CD4-positive, alpha-beta T cell (primary cell): ENCODE measurements at regions of chr17 and their contacts with region 1.

Region 1: GRCh38 chr17:55264645-55265298 is at the start of gene HLF:
- DNase-seq: peak; percentile 53 to 93 (median 69)
- ATAC-seq: peak; percentile 90
- H3K4me3 ChIP-seq: peak within 1 kb of the TSS; percentile 60
- H3K4me3 Mint-ChIP-seq: peak within 1 kb of the TSS; percentile 86
- H3K27ac ChIP-seq: no peak within 1 kb of the TSS
- H3K27ac Mint-ChIP-seq: no peak within 1 kb of the TSS
- H3K4me1 ChIP-seq: peaks cover 33% of the 10 kb centered on the region
- H3K4me1 Mint-ChIP-seq: peaks cover 24% of the 10 kb centered on the region
- H3K27me3 ChIP-seq: peaks cover 41 to 49% of the 10 kb centered on the region in 2 experiments
- H3K27me3 Mint-ChIP-seq: peaks cover 65% of the 10 kb centered on the region
- CTCF ChIP-seq: no peak
- total RNA-seq, gene HLF: 4.3 to 4.9 TPM

Region 2: DNA sequence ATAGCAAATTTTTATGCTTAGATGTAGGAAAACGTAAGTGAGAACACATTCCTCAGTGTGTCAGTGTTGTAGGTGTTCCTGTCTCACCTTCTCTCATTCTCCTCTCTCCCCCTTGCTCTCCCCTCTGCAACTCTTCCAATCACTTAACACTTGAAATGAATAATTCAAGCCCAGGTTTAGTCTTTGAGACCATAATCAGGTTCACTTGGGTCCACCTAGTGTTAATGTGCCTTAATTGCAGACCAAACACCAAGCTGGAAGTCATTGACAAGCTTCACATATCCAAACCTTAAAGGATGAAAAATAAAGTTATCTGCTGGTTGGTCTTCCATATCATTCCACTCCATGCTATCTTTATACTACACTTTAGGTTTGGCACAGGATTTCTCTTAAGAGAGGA is 259.3 kb before region 1 on chr17:
- CTCF ChIA-PET with region 1: no interaction called
- POLR2A ChIA-PET with region 1: no interaction called
- intact Hi-C with region 1: no loop called
- DNase-seq: peak in 3 of 14 experiments; percentile 0 to 13 (median 11)
- ATAC-seq: no peak
- H3K4me3 ChIP-seq: no peak overlapping the region
- H3K4me3 Mint-ChIP-seq: no peak overlapping the region
- H3K27ac ChIP-seq: no peak overlapping the region
- H3K27ac Mint-ChIP-seq: no peak overlapping the region
- H3K4me1 ChIP-seq: no peaks in the 10 kb centered on the region
- H3K4me1 Mint-ChIP-seq: no peaks in the 10 kb centered on the region
- H3K27me3 ChIP-seq: no peaks in the 10 kb centered on the region
- H3K27me3 Mint-ChIP-seq: no peaks in the 10 kb centered on the region
- CTCF ChIP-seq: peak; percentile 26

Region 3: DNA sequence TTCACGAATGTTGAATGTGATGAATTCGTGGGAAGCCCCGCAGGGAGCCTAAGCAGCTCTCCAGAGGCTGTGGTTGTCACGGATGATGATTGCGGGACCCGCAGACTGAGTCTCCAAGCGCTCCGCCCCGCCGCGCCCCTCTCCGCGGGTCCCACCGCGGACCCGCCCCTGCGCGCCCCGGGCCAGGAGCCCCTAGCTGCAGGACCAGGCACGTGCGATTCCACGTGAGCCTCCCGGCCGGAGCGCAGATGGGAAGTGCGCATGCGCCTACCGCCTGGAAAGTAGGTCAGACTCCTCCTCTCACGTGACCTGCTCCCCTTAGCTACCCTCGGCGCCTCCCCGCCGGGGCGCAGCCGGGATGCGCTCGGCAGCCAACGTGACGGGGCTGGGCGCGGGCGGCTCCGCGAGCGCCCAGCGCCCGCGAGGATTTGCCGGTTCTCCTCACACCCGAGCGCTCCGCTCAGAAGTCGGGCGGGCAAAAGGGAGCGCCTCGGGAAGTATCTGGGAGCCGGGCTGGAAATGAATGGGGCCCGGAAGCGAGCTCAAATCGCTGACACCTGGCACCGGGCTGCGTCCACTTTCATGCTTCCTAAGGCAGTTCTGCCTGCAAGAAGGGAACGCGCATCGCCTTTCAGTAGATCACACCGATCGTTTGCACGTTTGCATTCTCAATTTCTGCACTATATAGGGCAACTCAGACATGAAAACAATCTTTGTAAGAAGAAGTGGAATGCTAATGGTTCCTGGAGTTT is 26.4 kb before region 1 on chr17:
- CTCF ChIA-PET with region 1: interaction called, 6 read pairs
- POLR2A ChIA-PET with region 1: interaction called, 57 read pairs
- intact Hi-C with region 1: loop called (anchors 1 to 2 kb)
- DNase-seq: peak; percentile 75 to 96 (median 84)
- ATAC-seq: peak; percentile 89
- H3K4me3 ChIP-seq: peak overlapping the region; percentile 74
- H3K4me3 Mint-ChIP-seq: peak overlapping the region; percentile 89
- H3K27ac ChIP-seq: peak overlapping the region in 1 of 2 donors; percentile 65
- H3K27ac Mint-ChIP-seq: peak overlapping the region; percentile 87
- H3K4me1 ChIP-seq: peaks cover 19% of the 10 kb centered on the region
- H3K4me1 Mint-ChIP-seq: peaks cover 25% of the 10 kb centered on the region
- H3K27me3 ChIP-seq: peaks cover 0 to 3% of the 10 kb centered on the region in 2 experiments
- H3K27me3 Mint-ChIP-seq: peaks cover 23% of the 10 kb centered on the region
- CTCF ChIP-seq: no peak

Region 4: DNA sequence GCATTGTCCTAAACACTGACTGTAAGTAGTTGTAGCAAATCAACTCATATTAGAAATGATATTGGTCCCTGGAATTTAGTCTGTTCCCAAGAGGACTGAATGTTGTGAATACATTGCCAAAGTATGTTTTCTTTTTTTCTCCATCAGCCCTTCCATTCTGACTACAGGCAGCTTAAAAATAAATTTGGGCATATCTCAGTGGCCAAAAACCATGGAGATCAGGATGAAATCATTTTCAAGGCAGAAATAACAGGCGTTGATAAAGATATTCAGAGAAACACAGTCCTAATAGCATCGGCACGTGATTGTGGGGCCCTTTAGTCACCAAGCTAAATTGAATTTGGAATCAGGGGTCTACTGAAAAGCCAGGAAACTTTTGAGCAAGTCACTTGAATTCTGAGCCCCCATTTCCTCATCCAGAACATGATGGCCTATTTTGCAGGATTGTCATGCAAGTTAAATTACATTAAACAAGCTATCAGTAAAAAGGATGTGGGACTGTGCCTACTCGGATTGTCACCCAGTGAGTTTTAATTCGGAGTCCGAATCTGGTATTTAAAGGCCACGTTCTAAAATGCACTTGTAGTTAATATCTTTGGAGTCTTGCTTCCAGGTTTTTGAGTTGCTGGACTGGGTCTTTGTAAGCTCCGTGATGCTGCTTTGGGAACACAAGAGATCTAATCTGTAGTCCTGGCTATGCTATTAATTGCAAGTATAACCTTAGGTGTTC is 17.0 kb after region 1 on chr17:
- CTCF ChIA-PET with region 1: no interaction called
- POLR2A ChIA-PET with region 1: no interaction called
- intact Hi-C with region 1: no loop called
- DNase-seq: no peak
- ATAC-seq: no peak
- H3K4me3 ChIP-seq: no peak overlapping the region
- H3K4me3 Mint-ChIP-seq: no peak overlapping the region
- H3K27ac ChIP-seq: no peak overlapping the region
- H3K27ac Mint-ChIP-seq: no peak overlapping the region
- H3K4me1 ChIP-seq: peaks cover 20% of the 10 kb centered on the region
- H3K4me1 Mint-ChIP-seq: peaks cover 12% of the 10 kb centered on the region
- H3K27me3 ChIP-seq: no peaks in the 10 kb centered on the region
- H3K27me3 Mint-ChIP-seq: no peaks in the 10 kb centered on the region
- CTCF ChIP-seq: no peak